KBM-7 (cell line): ENCODE measurements at regions of chr1 and their contacts with region 1.

Region 1: GRCh38 chr1:117284399-117285215 is 73.9 kb upstream of the VTCN1 start:
- DNase-seq: peak; percentile 68

Region 2: GRCh38 chr1:117093870-117094621 is 190.6 kb before region 1 on chr1:
- in situ Hi-C with region 1: loop called (anchors 25 kb)
- DNase-seq: peak; percentile 15